ENCODE measurements at regions of chrX and their contacts with region 1.

Region 1: GRCh38 chrX:138745196-138745595 is 33.7 kb upstream of the FGF13 start:
- DNase-seq: peak; percentile 23
- H3K4me3 ChIP-seq: no peak overlapping the region
- H3K27ac ChIP-seq: no peak overlapping the region
- H3K4me1 ChIP-seq: no peaks in the 10 kb centered on the region
- H3K27me3 ChIP-seq: no peaks in the 10 kb centered on the region
- CTCF ChIP-seq: peak in 3 of 4 experiments; percentile 54 to 67 (median 64)
- POLR2A ChIP-seq: no peak

Region 2: DNA sequence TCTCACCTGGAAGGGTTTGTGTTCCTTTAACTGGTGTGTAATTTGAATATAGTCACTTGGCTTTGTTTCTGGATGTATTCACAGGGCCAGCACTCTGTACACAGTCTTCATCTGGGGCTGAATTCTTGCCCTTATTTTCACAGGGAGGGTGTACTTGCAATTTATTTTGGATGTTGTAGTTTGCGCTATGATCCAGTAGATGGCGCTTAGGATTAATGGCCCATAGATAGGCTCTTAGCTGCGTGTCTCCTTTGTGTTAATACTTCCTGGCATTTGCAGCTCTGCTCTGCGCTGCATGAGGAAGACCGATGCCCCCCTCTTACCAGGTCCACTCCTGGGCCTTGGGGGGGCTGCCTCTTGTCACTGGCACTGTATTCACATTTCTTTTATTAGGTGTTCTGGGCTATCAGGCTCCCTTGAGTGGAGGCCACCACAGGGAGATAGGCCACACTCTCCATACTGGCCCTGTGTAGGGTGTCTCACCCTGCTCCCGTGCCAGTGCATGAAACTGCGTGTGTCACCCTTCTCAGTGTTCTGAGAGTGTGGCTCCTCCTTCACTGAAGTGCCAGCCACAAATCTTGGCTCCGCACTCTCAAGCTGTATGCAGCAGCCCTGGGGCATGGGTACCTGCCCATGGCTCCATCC is 617.0 kb before region 1 on chrX:
- intact Hi-C with region 1: loop called (anchors 10 kb)
- DNase-seq: peak; percentile 4
- H3K4me3 ChIP-seq: no peak overlapping the region
- H3K27ac ChIP-seq: no peak overlapping the region
- H3K4me1 ChIP-seq: no peaks in the 10 kb centered on the region
- H3K27me3 ChIP-seq: no peaks in the 10 kb centered on the region
- CTCF ChIP-seq: peak in 1 of 4 experiments; percentile 26
- POLR2A ChIP-seq: no peak

Region 3: GRCh38 chrX:138298259-138298658 is 446.9 kb before region 1 on chrX:
- intact Hi-C with region 1: loop called (anchors 5 kb)
- DNase-seq: no peak
- H3K4me3 ChIP-seq: no peak overlapping the region
- H3K27ac ChIP-seq: no peak overlapping the region
- H3K4me1 ChIP-seq: no peaks in the 10 kb centered on the region
- H3K27me3 ChIP-seq: no peaks in the 10 kb centered on the region
- CTCF ChIP-seq: no peak
- POLR2A ChIP-seq: no peak